ENCODE measurements at regions of chr12 and their contacts with region 1.

Region 1: DNA sequence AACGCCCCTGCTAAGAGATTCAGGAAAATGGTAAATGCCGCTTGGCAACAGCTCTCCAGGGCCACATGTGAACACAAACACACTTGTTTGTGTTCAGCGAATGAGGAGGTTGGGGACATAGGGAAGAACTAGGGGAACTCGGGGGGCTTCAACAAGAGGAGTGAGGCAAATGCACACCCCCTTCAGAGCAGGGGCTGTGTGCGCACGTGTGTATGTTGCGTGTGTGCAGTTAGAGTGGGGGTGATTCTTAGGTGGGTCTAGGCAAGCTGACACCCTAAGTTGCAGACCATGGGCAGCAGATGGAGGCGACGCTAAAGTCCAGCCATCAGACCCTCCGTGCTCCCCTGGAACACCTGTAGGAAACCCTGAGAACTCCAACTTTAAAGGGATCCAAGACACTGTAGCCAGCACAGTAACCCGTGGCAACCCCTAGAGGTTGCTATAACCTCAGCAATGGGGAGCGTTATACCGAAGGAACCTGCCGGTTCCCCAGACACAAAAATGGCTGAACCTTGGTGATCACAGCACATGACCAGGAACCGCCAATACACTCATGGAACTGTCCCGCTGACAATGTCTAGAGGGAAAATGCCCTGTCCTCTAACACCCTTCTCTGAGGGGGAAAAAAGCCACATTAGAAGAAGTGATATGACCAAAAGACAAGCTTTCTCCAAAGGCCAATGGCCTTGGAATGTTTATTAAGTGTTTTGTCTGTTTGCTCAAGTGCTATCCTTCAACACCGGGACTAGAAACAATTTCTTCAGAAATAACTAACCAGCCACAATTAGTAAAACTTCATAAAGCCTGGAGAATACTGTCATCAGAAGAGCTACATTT is 86.5 kb upstream of the CEP83 start:
- DNase-seq: peak in 2 of 3 donors; percentile 35 to 74
- ATAC-seq: peak; percentile 97 to 98 (median 98)
- H3K4me3 ChIP-seq: no peak overlapping the region
- H3K27ac ChIP-seq: no peak overlapping the region
- H3K4me1 ChIP-seq: no peaks in the 10 kb centered on the region
- H3K27me3 ChIP-seq: no peaks in the 10 kb centered on the region
- CTCF ChIP-seq: peak; percentile 78 to 92 (median 86)
- POLR2A ChIP-seq: no peak

Region 2: DNA sequence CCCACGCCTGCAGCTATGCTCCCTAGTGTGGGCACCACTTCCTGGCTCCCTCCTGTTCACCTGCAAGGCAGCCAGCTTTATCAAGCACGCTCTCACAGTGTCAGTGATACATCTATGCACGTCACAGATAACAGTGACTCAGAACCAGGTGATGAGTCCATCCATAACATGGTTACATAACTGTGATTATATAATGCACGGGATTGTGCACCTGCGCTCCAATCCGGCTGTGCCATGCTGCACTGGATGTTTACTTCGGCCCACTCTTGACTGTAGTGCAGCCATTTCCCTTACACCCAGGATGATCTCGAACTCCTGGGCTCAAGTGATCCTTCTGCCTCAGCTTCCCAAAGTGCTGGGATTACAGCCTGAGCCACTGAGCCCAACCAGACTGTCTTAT is 48.1 kb before region 1 on chr12:
- intact Hi-C with region 1: no loop called
- DNase-seq: no peak
- ATAC-seq: no peak
- H3K4me3 ChIP-seq: no peak overlapping the region
- H3K27ac ChIP-seq: no peak overlapping the region
- H3K4me1 ChIP-seq: peaks cover 0 to 20% (median 0%) of the 10 kb centered on the region in 4 donors
- H3K27me3 ChIP-seq: no peaks in the 10 kb centered on the region
- CTCF ChIP-seq: no peak
- POLR2A ChIP-seq: no peak

Region 3: GRCh38 chr12:94689002-94689645 is 143.0 kb after region 1 on chr12:
- intact Hi-C with region 1: no loop called
- DNase-seq: no peak
- ATAC-seq: peak in 1 of 4 donors; percentile 12
- H3K4me3 ChIP-seq: no peak overlapping the region
- H3K27ac ChIP-seq: peak overlapping the region in 1 of 3 donors; percentile 20
- H3K4me1 ChIP-seq: peaks cover 0 to 26% (median 3%) of the 10 kb centered on the region in 4 donors
- H3K27me3 ChIP-seq: no peaks in the 10 kb centered on the region
- CTCF ChIP-seq: no peak
- POLR2A ChIP-seq: no peak

Region 4: GRCh38 chr12:94745562-94745961 is 199.4 kb after region 1 on chr12:
- intact Hi-C with region 1: no loop called
- DNase-seq: no peak
- ATAC-seq: no peak
- H3K4me3 ChIP-seq: no peak overlapping the region
- H3K27ac ChIP-seq: no peak overlapping the region
- H3K4me1 ChIP-seq: no peaks in the 10 kb centered on the region
- H3K27me3 ChIP-seq: no peaks in the 10 kb centered on the region
- CTCF ChIP-seq: no peak
- POLR2A ChIP-seq: no peak

Region 5: GRCh38 chr12:94762259-94762942 is 216.2 kb after region 1 on chr12:
- intact Hi-C with region 1: loop called in 1 of 2 experiments (anchors 10 kb)
- DNase-seq: no peak
- ATAC-seq: peak in 3 of 4 donors; percentile 28 to 38 (median 36)
- H3K4me3 ChIP-seq: no peak overlapping the region
- H3K27ac ChIP-seq: no peak overlapping the region
- H3K4me1 ChIP-seq: no peaks in the 10 kb centered on the region
- H3K27me3 ChIP-seq: no peaks in the 10 kb centered on the region
- CTCF ChIP-seq: no peak
- POLR2A ChIP-seq: no peak

Measured in right lobe of liver (tissue), 6 donors.